CD8-positive, alpha-beta T cell (primary cell): ENCODE measurements at regions of chr11 and their contacts with region 1.

Region 1: DNA sequence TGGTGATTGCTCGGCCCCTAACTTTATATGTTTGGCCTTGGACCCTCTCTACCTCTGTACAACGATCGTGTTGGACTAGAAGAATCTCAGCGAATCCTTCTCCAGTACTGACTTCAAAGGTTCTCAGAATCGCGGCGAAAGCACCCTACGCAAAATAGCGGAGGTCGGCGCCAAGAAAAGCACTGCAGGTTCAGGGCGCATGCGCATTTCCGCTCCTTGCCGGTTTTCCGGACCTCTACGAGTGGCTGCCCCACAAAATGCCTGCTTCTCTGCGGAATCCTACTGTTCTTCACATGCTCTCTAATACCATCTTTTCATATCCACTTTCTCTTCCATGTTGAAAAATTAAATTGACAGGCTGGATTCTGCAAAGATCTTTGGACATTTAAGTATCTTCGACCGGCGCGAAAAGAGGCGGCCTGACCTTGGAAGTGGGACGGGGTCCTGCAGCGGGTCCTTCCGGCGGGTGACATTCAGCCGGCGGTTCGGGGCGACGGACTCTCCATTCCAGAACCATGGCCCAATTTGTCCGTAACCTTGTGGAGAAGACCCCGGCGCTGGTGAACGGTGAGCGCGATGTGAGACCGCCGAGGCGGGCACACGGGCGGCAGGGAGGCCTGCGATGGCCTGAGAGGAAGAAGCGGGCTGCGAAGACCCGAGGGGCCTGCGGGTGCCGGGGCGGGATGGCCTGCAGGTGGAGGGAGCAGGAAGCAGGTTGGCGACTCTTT is at the start of gene ATP5MG:
- DNase-seq: peak; percentile 88 to 97 (median 93)
- ATAC-seq: peak; percentile 64
- H3K4me3 ChIP-seq: peak within 1 kb of the TSS; percentile 59 to 87
- H3K4me3 Mint-ChIP-seq: peak within 1 kb of the TSS; percentile 93
- H3K27ac ChIP-seq: peak within 1 kb of the TSS; percentile 77 to 96
- H3K27ac Mint-ChIP-seq: peak within 1 kb of the TSS; percentile 100
- H3K4me1 ChIP-seq: peaks cover 47% of the 10 kb centered on the region
- H3K4me1 Mint-ChIP-seq: peaks cover 70% of the 10 kb centered on the region
- H3K27me3 ChIP-seq: no peaks in the 10 kb centered on the region
- H3K27me3 Mint-ChIP-seq: no peaks in the 10 kb centered on the region
- CTCF ChIP-seq: no peak
- total RNA-seq, gene ATP5MG: 148 to 160 TPM

Region 2: DNA sequence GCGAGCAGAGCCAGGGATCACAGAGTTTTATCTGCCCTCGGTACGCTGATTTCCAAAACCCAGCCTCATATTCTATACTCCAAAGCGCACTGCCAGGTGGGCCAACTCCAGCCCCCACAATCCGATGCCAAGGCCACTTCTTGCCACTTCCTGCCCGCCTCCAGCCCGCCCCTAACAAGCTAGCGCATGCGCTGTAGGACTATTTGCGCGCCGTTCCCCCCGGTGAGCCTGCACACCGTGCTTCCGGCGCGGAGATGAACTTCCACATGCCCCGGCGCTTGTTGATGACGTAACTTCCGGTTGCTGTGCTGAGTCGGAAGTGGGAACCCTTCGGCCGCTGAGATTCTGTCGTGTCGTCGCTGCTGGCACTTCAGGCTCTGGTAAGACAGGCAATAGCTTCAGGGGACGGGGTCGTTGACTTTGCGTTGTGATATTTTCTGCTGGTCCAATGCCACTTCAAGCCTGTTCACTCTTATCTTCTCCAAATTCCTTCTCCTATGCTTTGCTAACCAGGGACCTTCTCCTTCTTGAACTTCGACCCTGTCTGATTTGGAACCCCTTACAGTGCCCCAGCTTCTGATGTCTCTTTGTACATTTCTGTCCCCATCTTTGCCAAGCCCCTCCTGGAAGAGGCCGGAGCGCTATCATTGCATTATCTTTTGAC is 41.9 kb before region 1 on chr11 and contains the start of gene UBE4A:
- CTCF ChIA-PET with region 1: no interaction called
- POLR2A ChIA-PET with region 1: interaction called, 4 read pairs
- intact Hi-C with region 1: loop called (anchors 1 to 5 kb)
- DNase-seq: peak; percentile 93 to 100 (median 99)
- ATAC-seq: peak; percentile 80
- H3K4me3 ChIP-seq: peak within 1 kb of the TSS; percentile 66 to 89
- H3K4me3 Mint-ChIP-seq: peak within 1 kb of the TSS; percentile 93
- H3K27ac ChIP-seq: peak within 1 kb of the TSS; percentile 89 to 93
- H3K27ac Mint-ChIP-seq: peak within 1 kb of the TSS; percentile 98
- H3K4me1 ChIP-seq: peaks cover 38% of the 10 kb centered on the region
- H3K4me1 Mint-ChIP-seq: peaks cover 52% of the 10 kb centered on the region
- H3K27me3 ChIP-seq: no peaks in the 10 kb centered on the region
- H3K27me3 Mint-ChIP-seq: no peaks in the 10 kb centered on the region
- CTCF ChIP-seq: no peak
- total RNA-seq, gene UBE4A: 53.7 to 57.5 TPM

Region 3: GRCh38 chr11:118364956-118365615 is 36.2 kb before region 1 on chr11:
- CTCF ChIA-PET with region 1: no interaction called
- POLR2A ChIA-PET with region 1: interaction called, 4 read pairs
- intact Hi-C with region 1: loop called in 1 of 2 experiments (anchors 5 kb)
- DNase-seq: no peak
- ATAC-seq: no peak
- H3K4me3 ChIP-seq: no peak overlapping the region
- H3K4me3 Mint-ChIP-seq: no peak overlapping the region
- H3K27ac ChIP-seq: no peak overlapping the region
- H3K27ac Mint-ChIP-seq: no peak overlapping the region
- H3K4me1 ChIP-seq: peaks cover 32% of the 10 kb centered on the region
- H3K4me1 Mint-ChIP-seq: peaks cover 43% of the 10 kb centered on the region
- H3K27me3 ChIP-seq: no peaks in the 10 kb centered on the region
- H3K27me3 Mint-ChIP-seq: no peaks in the 10 kb centered on the region
- CTCF ChIP-seq: no peak

Region 4: DNA sequence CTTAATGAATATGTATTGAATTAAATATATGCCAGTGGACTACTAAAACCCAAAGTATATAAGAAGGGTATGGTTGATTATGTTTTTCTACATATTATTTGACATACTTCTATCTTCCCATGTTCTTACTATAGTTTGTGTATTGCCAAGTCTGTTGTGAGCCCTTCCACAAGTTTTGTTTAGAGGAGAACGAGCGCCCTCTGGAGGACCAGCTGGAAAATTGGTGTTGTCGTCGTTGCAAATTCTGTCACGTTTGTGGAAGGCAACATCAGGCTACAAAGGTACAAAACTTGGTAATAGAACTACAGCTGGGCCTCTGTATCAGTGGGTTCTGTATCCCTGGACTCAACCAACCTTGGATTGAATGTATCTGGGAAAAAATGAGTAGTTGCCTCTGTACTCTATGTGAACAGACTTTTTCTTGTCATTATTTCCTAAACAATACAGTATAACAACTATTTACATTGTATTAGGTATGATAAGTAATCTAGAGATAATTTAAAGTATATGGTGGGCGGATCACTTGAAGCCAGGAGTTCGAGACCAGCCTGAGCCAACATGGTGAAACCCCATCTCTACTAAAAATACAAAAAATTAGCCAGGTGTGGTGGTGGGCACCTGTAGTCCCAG is 87.3 kb after region 1 on chr11:
- CTCF ChIA-PET with region 1: interaction called, 21 read pairs
- POLR2A ChIA-PET with region 1: interaction called, 4 read pairs
- intact Hi-C with region 1: loop called (anchors 1 kb)
- DNase-seq: peak; percentile 66 to 88 (median 81)
- ATAC-seq: peak; percentile 77
- H3K4me3 ChIP-seq: no peak overlapping the region
- H3K4me3 Mint-ChIP-seq: no peak overlapping the region
- H3K27ac ChIP-seq: no peak overlapping the region
- H3K27ac Mint-ChIP-seq: no peak overlapping the region
- H3K4me1 ChIP-seq: no peaks in the 10 kb centered on the region
- H3K4me1 Mint-ChIP-seq: peaks cover 4% of the 10 kb centered on the region
- H3K27me3 ChIP-seq: no peaks in the 10 kb centered on the region
- H3K27me3 Mint-ChIP-seq: no peaks in the 10 kb centered on the region
- CTCF ChIP-seq: peak; percentile 93

Region 5: GRCh38 chr11:118572061-118572980 is 171.0 kb after region 1 on chr11 and contains the start of gene ARCN1:
- CTCF ChIA-PET with region 1: no interaction called
- POLR2A ChIA-PET with region 1: no interaction called
- intact Hi-C with region 1: loop called (anchors 2 to 5 kb)
- DNase-seq: peak; percentile 61 to 91 (median 77)
- ATAC-seq: peak; percentile 91
- H3K4me3 ChIP-seq: peak within 1 kb of the TSS; percentile 99 to 100
- H3K4me3 Mint-ChIP-seq: peak within 1 kb of the TSS; percentile 94
- H3K27ac ChIP-seq: peak within 1 kb of the TSS; percentile 96 to 99
- H3K27ac Mint-ChIP-seq: peak within 1 kb of the TSS; percentile 97
- H3K4me1 ChIP-seq: peaks cover 34% of the 10 kb centered on the region
- H3K4me1 Mint-ChIP-seq: peaks cover 49% of the 10 kb centered on the region
- H3K27me3 ChIP-seq: no peaks in the 10 kb centered on the region
- H3K27me3 Mint-ChIP-seq: no peaks in the 10 kb centered on the region
- CTCF ChIP-seq: no peak
- total RNA-seq, gene ARCN1: 77.8 to 81.2 TPM

Region 6: DNA sequence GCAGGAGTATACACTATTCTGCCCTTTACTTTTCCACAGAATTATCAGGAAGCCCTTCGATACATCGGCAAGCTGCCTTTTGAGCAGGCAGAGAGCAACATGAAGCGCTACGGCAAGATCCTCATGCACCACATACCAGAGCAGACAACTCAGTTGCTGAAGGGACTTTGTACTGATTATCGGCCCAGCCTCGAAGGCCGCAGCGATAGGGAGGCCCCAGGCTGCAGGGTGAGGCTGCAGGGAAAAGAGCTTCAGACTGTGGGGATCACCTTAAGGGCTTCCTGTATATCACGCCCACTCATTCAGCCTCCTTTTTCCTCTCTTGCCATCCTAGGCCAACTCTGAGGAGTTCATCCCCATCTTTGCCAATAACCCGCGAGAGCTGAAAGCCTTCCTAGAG is 676.5 kb after region 1 on chr11:
- CTCF ChIA-PET with region 1: no interaction called
- POLR2A ChIA-PET with region 1: no interaction called
- intact Hi-C with region 1: no loop called
- DNase-seq: no peak
- ATAC-seq: no peak
- H3K4me3 ChIP-seq: no peak overlapping the region
- H3K4me3 Mint-ChIP-seq: no peak overlapping the region
- H3K27ac ChIP-seq: no peak overlapping the region
- H3K27ac Mint-ChIP-seq: no peak overlapping the region
- H3K4me1 ChIP-seq: no peaks in the 10 kb centered on the region
- H3K4me1 Mint-ChIP-seq: peaks cover 2% of the 10 kb centered on the region
- H3K27me3 ChIP-seq: no peaks in the 10 kb centered on the region
- H3K27me3 Mint-ChIP-seq: no peaks in the 10 kb centered on the region
- CTCF ChIP-seq: no peak